AG04450 (cell line): ENCODE measurements at regions of chr10 and their contacts with region 1.

Region 1: GRCh38 chr10:58064714-58065528 is 202.8 kb downstream of the IPMK start:
- DNase-seq: peak; percentile 10
- H3K4me3 ChIP-seq: no peak overlapping the region
- H3K27ac ChIP-seq: no peak overlapping the region
- H3K27me3 ChIP-seq: no peaks in the 10 kb centered on the region
- CTCF ChIP-seq: peak; percentile 95

Region 2: GRCh38 chr10:57338823-57339558 is 725.9 kb before region 1 on chr10:
- CTCF ChIA-PET with region 1: interaction called, 31 read pairs
- POLR2A ChIA-PET with region 1: no interaction called
- DNase-seq: no peak
- H3K4me3 ChIP-seq: no peak overlapping the region
- H3K27ac ChIP-seq: no peak overlapping the region
- H3K27me3 ChIP-seq: no peaks in the 10 kb centered on the region
- CTCF ChIP-seq: peak; percentile 71

Region 3: DNA sequence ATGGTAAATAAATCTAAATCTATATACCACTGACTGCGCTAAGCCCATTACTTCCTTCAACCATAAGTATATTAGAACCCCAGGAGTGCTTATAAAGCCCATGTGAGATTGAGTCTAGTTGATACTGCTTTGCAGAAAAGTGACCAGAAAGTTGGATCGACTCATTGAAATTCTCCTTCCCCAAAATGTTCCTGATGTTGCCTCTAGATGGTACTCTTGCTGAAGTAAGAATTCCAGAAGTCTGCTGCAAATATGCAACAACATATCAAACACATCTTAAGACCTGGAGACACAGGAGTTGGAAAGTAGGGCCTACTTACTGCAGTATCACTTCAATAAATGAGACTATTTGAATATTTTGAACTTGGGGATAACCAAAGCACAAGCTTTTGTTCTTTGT is 348.0 kb before region 1 on chr10:
- CTCF ChIA-PET with region 1: interaction called, 15 read pairs
- POLR2A ChIA-PET with region 1: no interaction called
- DNase-seq: no peak
- H3K4me3 ChIP-seq: no peak overlapping the region
- H3K27ac ChIP-seq: no peak overlapping the region
- H3K27me3 ChIP-seq: no peaks in the 10 kb centered on the region
- CTCF ChIP-seq: peak; percentile 36; the same call in 1 of the 2 replicates

Region 4: DNA sequence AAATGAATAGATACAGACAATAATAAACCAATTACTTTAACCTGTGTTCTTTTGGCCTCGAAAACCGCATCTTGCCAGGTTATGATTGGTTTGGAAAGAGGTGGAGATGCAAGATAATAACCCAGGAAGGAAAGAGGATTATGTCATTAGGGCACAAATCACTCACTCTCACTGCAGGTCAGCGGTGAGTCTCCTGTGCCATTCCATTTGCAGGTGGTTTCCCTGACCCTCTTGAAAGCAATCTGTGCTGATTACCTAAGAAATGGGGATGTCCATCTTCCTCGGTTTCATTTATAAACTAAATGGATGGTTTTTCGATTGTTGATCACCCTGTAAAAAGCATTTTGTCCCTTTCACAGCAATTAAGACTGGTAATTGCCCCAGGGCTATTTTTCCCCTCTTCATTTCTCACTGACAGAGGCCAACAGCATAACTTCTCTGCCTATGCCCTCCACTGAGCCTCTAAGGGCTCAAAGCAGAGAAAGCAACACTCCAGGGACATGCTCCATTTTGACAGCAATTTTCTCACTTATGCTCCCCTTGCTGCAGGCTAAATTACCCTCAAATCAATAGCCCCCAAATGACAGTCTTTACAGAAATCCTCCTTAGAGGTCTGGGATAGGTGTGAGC is 54.7 kb before region 1 on chr10:
- CTCF ChIA-PET with region 1: no interaction called
- POLR2A ChIA-PET with region 1: no interaction called
- DNase-seq: no peak
- H3K4me3 ChIP-seq: no peak overlapping the region
- H3K27ac ChIP-seq: no peak overlapping the region
- H3K27me3 ChIP-seq: no peaks in the 10 kb centered on the region
- CTCF ChIP-seq: no peak

Region 5: DNA sequence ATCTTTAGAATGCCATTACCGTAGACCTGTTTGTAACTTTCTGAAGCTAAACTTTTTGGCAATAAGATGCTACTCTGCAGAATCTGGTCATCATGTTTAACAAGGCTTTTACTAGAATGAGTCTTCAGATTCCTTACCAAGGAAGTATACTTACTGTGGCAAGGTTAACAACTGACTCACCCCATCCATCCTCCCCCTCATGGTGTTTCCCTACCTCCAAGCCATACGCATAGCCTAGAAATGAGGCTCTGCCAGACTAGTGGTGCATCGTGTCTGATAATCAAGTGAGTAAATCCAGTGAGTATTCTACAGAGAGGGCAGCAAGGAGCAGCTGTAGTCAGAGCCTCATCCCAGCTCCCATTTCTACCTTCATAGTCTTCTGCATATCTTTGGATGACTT is 20.8 kb before region 1 on chr10:
- CTCF ChIA-PET with region 1: interaction called, 10 read pairs
- POLR2A ChIA-PET with region 1: no interaction called
- DNase-seq: peak; percentile 64
- H3K4me3 ChIP-seq: no peak overlapping the region
- H3K27ac ChIP-seq: no peak overlapping the region
- H3K27me3 ChIP-seq: no peaks in the 10 kb centered on the region
- CTCF ChIP-seq: no peak

Region 6: DNA sequence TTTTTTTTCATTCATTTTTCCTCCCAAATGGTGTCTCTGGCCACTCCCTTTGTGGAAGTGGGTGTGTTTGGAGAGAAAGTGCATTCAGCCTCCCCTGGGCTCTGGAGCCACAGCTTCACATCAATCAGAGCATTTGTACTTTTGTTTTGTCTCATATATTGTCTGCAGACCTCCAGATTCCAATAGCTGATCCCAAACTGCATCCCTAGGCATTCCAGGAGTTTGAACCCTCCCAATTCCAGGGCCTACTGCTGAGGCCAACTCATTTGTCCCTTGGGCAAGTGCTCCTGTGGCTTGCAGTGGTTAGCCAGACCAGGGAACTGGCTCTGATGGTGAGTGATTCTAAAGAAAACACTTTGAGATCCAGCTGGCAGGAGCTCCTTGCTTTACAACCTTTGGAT is 39.4 kb after region 1 on chr10:
- CTCF ChIA-PET with region 1: no interaction called
- POLR2A ChIA-PET with region 1: no interaction called
- DNase-seq: no peak
- H3K4me3 ChIP-seq: no peak overlapping the region
- H3K27ac ChIP-seq: no peak overlapping the region
- H3K27me3 ChIP-seq: no peaks in the 10 kb centered on the region
- CTCF ChIP-seq: no peak

Region 7: GRCh38 chr10:58115218-58116052 is 50.5 kb after region 1 on chr10:
- CTCF ChIA-PET with region 1: no interaction called
- POLR2A ChIA-PET with region 1: no interaction called
- DNase-seq: no peak
- H3K4me3 ChIP-seq: no peak overlapping the region
- H3K27ac ChIP-seq: no peak overlapping the region
- H3K27me3 ChIP-seq: no peaks in the 10 kb centered on the region
- CTCF ChIP-seq: no peak

Region 8: DNA sequence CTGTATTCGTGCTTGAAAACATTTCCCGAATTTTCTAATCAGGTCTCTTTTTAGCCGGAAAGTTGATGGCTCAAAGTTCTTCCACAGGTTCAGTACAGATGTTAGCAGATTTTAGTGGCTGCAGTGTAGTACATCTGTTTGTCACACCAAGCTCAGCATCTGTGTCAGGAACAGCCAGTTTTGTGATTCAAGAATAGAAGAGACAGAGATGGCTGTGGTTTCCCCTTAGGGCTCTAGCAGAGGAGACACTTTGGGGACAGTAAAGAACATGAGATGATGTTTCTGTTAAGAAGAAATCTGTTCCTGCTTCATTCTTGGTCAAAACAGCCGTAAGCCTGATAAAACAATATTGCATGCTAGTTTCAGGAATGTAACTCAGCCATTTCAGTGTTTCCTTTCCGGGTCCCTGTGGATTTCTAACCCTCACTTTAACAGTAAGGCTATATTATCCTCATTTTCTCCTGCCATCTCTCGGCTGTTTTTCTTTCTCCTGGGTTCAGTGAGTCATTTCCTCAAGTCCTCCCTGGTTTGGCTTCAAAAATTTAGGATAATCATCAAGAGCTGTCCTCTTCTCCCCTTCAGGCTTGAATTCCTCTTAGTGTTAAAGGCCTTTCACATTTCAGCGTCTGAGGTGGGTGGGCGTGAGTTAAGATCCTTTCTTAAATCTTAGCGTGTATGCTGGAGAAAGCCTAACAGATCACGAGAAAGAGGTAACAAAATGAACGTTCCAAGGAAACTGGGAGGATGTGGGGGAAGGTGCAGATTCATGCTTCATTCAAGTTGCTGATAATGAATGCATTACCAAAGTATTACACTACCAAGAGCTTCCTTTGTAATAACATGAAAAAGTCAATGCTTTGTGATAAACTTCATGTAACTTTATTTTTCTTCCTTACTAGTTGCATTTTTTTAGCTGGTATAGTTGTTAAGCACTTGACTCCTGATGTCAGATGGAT is 410.7 kb after region 1 on chr10:
- CTCF ChIA-PET with region 1: no interaction called
- POLR2A ChIA-PET with region 1: no interaction called
- DNase-seq: no peak
- H3K4me3 ChIP-seq: peak overlapping the region; percentile 8; the same call in 1 of the 2 replicates
- H3K27ac ChIP-seq: peak overlapping the region; percentile 59
- H3K27me3 ChIP-seq: no peaks in the 10 kb centered on the region
- CTCF ChIP-seq: no peak